GM18951 (cell line): ENCODE measurements at regions of chr3 and their contacts with region 1.

Region 1: DNA sequence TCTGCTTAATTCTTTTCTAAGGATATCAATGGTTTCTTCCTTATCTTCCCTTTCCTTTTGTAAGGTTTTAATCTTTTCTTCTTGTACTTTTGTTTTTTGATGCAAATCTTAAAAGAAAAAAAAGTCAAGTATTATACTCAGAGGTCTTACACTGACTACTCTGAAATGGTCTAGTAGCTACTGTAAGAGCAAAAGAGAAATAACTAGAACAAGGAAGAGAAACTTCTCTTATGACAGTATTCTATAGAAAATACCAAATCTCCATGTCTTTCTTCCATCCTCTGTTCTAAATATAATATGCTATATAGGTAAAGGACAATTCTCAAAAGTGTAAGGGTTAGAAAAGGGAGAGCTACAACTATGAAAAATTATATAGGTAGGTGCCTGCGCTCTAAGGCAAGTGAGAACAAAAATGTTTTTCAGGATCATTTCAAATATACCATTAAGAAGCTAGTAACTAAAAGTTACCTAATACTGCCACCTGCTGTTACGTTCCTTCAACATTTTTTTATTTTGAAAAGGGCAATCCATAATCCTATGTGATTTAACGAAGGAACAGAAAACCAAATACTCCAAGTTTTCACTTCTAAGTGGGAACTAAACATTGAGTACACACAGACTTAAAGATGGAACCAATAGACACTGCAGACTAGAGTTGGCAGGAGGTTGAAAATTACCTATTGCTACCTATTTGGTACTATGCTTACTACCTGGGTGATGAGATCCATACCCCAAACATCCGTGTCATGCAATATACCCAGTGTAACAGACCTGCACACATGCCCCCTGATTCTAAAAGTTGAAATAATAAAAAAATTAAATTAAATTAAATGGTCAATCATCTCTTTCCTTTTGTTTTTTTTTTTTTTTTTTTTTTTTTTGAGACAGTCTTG is 36.7 kb downstream of the CIP2A start:
- POLR2A ChIP-seq: no peak

Region 2: GRCh38 chr3:108293858-108294257 is 258.7 kb before region 1 on chr3:
- in situ Hi-C with region 1: no loop called
- POLR2A ChIP-seq: no peak

Region 3: DNA sequence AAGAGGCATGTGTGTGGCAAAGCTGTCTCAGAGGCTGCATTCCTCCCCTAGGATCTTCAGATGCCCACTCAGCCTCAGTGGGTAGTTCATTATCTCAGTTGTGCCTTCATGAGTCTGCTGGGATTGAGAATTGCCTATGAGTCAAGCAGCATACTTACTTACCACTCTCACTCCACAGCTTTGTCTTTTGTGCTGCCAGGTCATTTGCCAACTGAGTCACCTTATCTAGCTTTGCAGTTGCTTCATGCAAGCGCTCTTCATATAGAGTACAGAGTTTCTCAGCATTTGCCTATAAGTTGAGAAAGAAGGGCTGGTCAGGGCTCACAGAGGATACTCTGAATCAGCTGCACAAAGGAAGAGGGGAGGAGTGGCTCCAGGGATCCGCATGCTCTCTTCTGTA is 131.6 kb before region 1 on chr3:
- in situ Hi-C with region 1: no loop called
- POLR2A ChIP-seq: no peak

Region 4: GRCh38 chr3:108489771-108490170 is 62.7 kb before region 1 on chr3:
- in situ Hi-C with region 1: loop called (anchors 5 kb)
- POLR2A ChIP-seq: no peak